ENCODE measurements at regions of chr2 and their contacts with region 1.

Region 1: DNA sequence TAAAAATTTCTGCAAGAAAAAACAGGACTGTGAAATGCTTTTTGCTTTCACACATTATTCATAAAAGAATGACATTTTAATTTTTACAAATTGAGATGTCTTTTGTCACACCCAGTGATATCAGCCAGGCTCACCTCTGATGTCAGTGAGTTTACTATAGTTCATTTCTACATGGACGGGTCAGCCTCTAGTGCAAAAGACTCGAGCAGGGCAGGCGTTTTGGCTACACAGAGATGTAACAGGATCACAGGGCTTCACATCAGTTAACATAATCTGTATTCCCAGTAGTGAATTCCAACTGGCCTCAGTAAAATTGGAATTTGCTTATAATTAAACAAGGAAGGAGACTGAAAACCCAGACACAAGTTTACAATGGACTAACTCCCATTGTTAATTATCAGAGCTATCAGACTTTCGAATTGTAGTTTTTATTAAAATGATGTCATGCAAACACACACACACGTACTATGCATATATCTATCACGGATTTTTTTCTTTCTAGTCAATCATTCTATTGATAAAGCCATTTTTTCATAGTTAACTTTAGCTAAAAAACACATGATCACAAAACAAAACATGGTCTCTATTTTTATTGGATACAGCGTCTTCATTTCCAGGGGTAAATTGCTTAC is 275.7 kb upstream of the ZSWIM2 start:
- DNase-seq: no peak
- H3K4me3 ChIP-seq: no peak overlapping the region
- H3K27ac ChIP-seq: no peak overlapping the region
- H3K4me1 ChIP-seq: no peaks in the 10 kb centered on the region
- H3K27me3 ChIP-seq: no peaks in the 10 kb centered on the region
- CTCF ChIP-seq: no peak

Region 2: DNA sequence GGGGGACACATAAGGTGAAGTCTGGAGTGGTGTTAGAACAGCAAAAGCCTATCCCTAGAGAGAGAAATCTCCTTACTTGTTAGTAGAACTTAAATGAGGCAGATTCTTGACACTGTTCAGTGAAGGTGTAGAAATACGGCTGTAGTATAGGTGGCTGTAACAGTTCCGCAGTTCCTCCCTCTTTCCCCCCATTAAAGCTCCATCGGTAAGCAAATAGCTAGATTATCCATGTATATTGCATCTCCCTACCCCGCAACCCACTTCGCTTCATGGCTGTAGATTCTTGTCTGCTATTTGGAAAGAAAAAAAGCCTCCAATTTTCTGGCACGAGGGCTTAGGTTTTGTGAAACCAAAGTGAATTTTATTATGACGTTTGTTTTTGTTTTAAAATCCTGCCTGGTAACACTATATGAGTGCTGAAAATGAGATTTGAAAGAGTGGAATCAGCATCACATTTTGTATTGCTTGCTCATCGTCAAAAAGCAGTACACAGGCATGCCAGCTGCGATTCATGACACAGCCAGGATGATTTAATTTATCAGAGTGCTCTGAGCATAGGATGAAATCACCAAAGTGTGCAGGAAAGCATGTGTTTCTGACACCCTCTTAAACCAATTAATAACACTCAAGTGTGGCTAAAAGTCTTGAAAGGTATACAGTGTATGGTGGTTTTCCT is 429.4 kb before region 1 on chr2:
- CTCF ChIA-PET with region 1: no interaction called
- POLR2A ChIA-PET with region 1: no interaction called
- intact Hi-C with region 1: no loop called
- DNase-seq: no peak
- H3K4me3 ChIP-seq: no peak overlapping the region
- H3K27ac ChIP-seq: no peak overlapping the region
- H3K4me1 ChIP-seq: no peaks in the 10 kb centered on the region; the same call in 1 of the 2 replicates
- H3K27me3 ChIP-seq: no peaks in the 10 kb centered on the region
- CTCF ChIP-seq: no peak

Region 3: GRCh38 chr2:187468262-187468661 is 343.6 kb after region 1 on chr2:
- CTCF ChIA-PET with region 1: no interaction called
- POLR2A ChIA-PET with region 1: interaction called, 19 read pairs
- intact Hi-C with region 1: no loop called
- DNase-seq: no peak
- H3K4me3 ChIP-seq: no peak overlapping the region
- H3K27ac ChIP-seq: no peak overlapping the region
- H3K4me1 ChIP-seq: peaks cover 5% of the 10 kb centered on the region; the same call in 1 of the 2 replicates
- H3K27me3 ChIP-seq: no peaks in the 10 kb centered on the region
- CTCF ChIP-seq: no peak

Measured in PC-9 (cell line).